Activated CD4-positive, alpha-beta T cell treated with anti-CD3 and anti-CD28 coated beads, Interleukin-2, amount 10 ng/mL, durations not matched to agents 24 days and 14 days (primary cell): ENCODE measurements at regions of chr9 and their contacts with region 1.

Region 1: DNA sequence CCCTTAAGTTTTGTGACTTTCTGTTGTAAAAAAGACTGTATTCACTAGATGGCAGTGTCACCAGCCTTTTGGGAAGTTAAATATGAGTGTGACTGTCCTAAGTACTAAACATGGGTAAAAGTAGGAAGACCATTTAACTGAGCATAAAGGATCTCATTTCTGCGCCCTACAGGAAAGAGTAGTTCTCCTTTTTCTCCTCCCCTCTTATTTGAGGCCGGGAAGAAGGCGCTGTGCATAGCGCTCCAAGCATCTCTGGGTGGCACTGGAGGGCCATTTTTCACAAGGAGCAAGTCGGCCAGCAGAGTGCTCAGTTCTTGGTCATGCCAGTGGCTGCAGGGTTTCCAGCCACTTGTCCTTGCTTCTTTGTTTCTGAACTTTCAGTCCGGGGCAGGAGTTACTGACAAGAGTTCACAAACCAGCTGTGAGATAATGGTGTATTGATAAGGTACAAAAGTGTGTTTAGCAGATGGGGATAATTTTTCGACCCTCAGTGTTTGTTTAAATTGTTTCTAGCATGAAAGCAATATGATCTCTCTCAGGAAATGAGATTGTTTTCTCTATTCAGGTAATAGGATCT is 227.6 kb upstream of the DMRT1 start:
- DNase-seq: peak; percentile 76
- H3K4me3 Mint-ChIP-seq: no peak overlapping the region
- H3K27ac Mint-ChIP-seq: no peak overlapping the region
- H3K4me1 Mint-ChIP-seq: peaks cover 4% of the 10 kb centered on the region
- H3K27me3 Mint-ChIP-seq: peaks cover 3% of the 10 kb centered on the region

Region 2: GRCh38 chr9:419571-420402 is 194.1 kb before region 1 on chr9:
- intact Hi-C with region 1: no loop called
- DNase-seq: no peak
- H3K4me3 Mint-ChIP-seq: no peak overlapping the region
- H3K27ac Mint-ChIP-seq: no peak overlapping the region
- H3K4me1 Mint-ChIP-seq: no peaks in the 10 kb centered on the region
- H3K27me3 Mint-ChIP-seq: no peaks in the 10 kb centered on the region

Region 3: DNA sequence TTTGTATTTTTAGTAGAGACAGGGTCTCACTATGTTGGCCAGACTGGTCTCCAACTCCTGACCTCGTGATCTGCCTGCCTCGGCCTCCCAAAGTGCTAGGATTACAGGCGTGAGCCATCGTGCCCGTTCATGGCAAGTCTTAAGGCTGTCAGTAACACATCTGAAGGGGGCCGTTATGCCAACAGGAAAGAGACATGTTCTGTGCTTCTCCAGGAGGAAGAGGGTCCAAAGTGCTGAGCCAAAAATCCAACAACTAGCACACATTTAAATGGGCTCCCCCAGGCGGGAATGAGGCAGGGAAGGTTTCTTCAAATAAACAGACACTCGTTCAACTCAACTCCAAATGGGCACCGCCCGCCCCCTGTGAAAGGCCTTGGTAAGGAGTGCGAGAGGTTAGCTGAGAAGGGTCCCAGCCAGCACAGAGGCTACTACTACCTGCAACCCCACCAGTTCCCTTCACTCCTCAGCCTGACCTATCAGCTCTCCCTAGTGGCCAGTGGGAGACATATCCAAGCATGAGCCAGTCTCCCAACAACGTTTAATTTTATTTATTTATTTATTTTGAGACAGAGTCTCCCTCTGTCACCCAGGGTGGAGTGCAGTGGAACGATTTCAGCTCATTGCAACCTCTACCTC is 143.5 kb after region 1 on chr9:
- intact Hi-C with region 1: loop called (anchors 1 kb)
- DNase-seq: no peak
- H3K4me3 Mint-ChIP-seq: no peak overlapping the region
- H3K27ac Mint-ChIP-seq: no peak overlapping the region
- H3K4me1 Mint-ChIP-seq: peaks cover 25% of the 10 kb centered on the region
- H3K27me3 Mint-ChIP-seq: peaks cover 2% of the 10 kb centered on the region

Region 4: DNA sequence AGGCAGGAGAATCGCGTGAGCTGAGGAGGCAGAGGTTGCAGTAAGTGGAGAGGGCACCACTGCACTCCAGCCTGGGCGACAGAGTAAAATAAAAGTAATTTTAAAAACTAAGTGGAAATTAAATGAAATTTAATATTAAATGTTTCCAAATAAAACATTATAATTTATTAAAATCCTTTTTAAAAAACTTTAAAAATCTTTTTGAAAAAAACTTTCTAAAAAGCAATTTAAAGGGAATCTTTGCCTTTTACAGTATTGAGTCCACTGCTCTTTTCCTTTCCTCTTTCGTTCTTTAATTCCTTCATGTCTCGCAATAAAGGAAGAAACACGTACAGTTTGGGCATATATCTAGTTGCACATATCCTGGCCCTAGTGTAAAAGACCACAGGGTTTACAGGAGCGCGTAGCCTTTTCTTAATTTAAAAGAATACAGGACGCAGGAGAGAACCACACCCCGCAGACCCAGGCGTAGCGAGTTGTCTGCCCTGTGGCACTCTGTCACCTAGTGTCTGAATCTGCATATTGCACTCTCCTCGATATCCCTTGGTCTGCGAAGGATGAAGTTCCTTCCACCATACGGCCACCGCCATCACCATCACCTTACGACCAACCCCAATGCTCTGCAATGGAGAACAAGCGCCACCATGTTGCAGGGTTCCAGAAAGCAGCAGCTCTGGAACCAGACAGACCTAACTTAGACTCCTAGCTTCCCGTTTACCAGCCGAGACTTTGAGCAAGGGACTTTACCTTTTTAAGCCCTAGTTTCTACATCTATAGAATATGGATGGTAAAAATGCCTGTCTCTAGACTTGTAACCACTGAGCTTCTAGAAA is 150.0 kb after region 1 on chr9:
- intact Hi-C with region 1: loop called (anchors 1 kb)
- DNase-seq: peak; percentile 81
- H3K4me3 Mint-ChIP-seq: no peak overlapping the region
- H3K27ac Mint-ChIP-seq: no peak overlapping the region
- H3K4me1 Mint-ChIP-seq: peaks cover 9% of the 10 kb centered on the region
- H3K27me3 Mint-ChIP-seq: peaks cover 23% of the 10 kb centered on the region

Region 5: DNA sequence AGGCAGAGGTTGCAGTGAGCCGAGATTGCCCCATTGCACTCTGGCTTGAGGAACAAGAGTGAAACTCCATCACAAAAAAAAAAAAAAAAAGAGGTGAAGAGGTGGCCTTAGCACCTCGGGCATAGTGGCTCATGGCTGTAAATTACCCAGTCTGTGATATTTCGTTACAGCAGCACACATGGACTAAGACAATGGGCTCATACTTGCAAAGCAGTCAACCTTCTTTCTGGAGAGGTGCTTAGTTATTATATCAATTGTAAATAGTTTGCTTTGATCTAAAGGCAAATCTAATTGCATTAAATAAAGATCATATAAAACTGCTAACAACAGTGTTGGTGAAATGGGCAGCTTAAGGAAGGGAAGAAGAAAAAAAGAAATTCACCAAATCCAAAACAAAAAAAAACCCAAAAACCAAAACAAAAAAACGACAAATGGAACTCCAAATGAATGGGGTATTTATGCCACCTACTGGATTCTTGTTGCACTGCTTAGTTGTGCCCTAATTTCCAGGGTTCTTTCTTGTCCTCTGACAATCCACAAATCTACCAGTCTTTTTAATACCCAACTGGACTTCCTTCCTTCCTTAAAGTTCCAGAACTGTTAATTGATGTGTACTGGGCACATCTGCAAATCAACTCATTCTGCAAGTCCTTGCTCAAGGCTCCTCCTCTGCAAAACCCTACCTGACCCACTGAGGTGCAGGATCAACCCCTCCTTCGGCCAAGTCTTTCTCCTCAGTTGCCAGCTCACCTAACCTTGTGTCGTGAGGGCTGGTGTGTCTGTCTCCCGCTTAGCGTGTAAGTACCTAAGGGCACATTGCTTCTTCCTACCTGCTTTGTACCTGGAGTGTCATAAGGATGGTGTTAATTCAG is 192.7 kb after region 1 on chr9:
- intact Hi-C with region 1: loop called (anchors 1 kb)
- DNase-seq: peak; percentile 65
- H3K4me3 Mint-ChIP-seq: no peak overlapping the region
- H3K27ac Mint-ChIP-seq: no peak overlapping the region
- H3K4me1 Mint-ChIP-seq: no peaks in the 10 kb centered on the region
- H3K27me3 Mint-ChIP-seq: peaks cover 15% of the 10 kb centered on the region

Region 6: GRCh38 chr9:893843-894420 is 280.1 kb after region 1 on chr9:
- intact Hi-C with region 1: loop called (anchors 5 kb)
- DNase-seq: peak; percentile 83
- H3K4me3 Mint-ChIP-seq: no peak overlapping the region
- H3K27ac Mint-ChIP-seq: no peak overlapping the region
- H3K4me1 Mint-ChIP-seq: peaks cover 7% of the 10 kb centered on the region
- H3K27me3 Mint-ChIP-seq: peaks cover 15% of the 10 kb centered on the region

Region 7: GRCh38 chr9:1009101-1009707 is 395.3 kb after region 1 on chr9:
- intact Hi-C with region 1: loop called (anchors 2 kb)
- DNase-seq: peak; percentile 93
- H3K4me3 Mint-ChIP-seq: no peak overlapping the region
- H3K27ac Mint-ChIP-seq: no peak overlapping the region
- H3K4me1 Mint-ChIP-seq: peaks cover 7% of the 10 kb centered on the region
- H3K27me3 Mint-ChIP-seq: peaks cover 6% of the 10 kb centered on the region